Gastrocnemius medialis (tissue), 4 donors: ENCODE measurements at regions of chr2 and their contacts with region 1.

Region 1: DNA sequence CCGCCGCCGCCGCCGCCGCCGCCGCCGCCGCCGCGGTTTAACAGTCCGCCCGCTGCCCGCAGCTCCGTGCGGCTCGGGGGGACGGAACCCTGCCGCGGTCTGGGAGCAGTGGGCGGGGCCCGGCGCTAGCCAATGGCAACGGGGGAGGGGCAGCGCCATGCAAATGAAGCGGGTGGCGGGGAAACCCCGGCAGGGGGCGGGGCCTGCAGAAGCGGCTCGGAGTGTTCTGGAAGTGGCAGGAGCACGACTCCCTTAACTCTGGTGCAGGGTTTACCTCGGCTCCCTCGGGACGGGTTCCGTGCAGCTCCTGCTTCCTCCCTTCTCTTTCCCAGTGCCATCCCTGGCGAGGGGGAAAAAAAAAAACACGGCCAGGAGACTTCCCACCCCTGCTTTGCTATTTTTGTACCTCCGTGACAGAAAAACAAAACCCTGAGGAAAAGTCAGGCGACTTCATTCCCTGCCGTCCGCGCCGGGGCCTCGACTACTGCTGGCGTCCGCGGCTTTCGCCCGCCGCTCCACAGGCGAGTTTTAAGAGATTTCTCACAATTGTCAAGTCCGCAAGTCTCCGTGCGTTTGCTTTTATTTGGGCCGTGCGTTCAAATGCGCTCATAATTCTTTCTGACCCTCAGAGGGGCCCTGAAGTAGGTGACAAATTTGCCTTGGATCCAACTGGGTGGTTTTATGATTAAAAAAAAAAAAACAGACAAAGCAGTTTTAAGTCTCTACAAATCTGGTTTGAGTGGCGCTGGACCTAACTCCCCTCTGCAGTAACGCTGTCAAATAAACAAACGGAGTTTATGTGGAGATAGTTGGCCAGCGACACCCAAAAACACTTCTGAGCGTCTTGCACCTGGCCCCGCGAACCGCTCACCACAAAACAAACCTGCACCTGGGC is at the start of gene KANSL1L:
- DNase-seq: peak; percentile 98 to 99
- ATAC-seq: peak; percentile 83 to 85
- H3K4me3 ChIP-seq: peak within 1 kb of the TSS; percentile 72 to 96 (median 84)
- H3K27ac ChIP-seq: peak within 1 kb of the TSS; percentile 99 to 100 (median 100)
- H3K4me1 ChIP-seq: peaks cover 35 to 38% of the 10 kb centered on the region in 2 donors
- H3K27me3 ChIP-seq: no peaks in the 10 kb centered on the region
- CTCF ChIP-seq: no peak
- POLR2A ChIP-seq: peak; percentile 85 to 90
- total RNA-seq, gene KANSL1L: 19.4 to 21.9 (median 20.4) TPM

Region 2: GRCh38 chr2:210002158-210003157 is 169.1 kb before region 1 on chr2 and contains the start of gene RPE:
- in situ Hi-C with region 1: no loop called
- intact Hi-C with region 1: loop called (anchors 2 kb)
- DNase-seq: peak; percentile 92 to 95
- ATAC-seq: peak; percentile 99
- H3K4me3 ChIP-seq: peak within 1 kb of the TSS; percentile 94 to 98 (median 95)
- H3K27ac ChIP-seq: peak within 1 kb of the TSS; percentile 79 to 91 (median 84)
- H3K4me1 ChIP-seq: peaks cover 37 to 47% of the 10 kb centered on the region in 2 donors
- H3K27me3 ChIP-seq: no peaks in the 10 kb centered on the region
- CTCF ChIP-seq: no peak
- POLR2A ChIP-seq: peak; percentile 47 to 76
- total RNA-seq, gene RPE: 9.2 to 73.5 (median 23.2) TPM

Region 3: DNA sequence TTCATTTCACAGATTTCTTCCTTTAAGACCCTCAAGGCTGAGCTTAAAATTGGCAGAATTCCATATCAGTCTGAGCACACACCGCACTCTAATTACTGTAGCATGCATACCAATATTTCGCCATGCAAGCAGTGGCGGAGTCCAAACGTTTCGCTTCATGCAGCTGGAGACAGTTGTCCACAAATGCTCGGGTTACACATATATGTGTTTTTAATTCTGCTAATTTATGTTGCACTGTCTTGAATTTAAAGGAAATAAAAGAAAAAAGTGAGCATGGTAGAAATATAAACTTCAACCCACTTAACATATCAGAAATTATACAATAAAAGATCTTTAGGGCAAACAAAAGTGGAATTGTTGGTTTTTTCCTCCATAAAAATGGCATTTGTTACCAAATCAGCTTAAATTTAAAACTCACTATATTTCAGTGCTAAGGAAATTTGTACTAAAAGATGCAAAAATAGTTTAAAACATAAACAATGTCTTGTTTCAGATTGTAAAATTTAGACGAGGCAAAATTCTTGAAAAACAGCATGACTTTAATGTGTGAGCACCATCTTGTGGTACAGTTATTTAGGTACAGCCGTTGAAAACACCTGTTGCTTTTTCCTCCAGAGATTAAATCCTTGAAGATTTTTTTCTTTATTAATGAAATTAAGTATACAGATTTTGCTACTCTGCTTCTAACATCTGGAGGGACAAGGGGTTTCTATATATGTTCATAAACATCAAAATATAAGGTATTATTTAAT is 23.7 kb after region 1 on chr2:
- in situ Hi-C with region 1: no loop called
- intact Hi-C with region 1: loop called (anchors 2 kb)
- DNase-seq: no peak
- ATAC-seq: peak; percentile 49 to 50
- H3K4me3 ChIP-seq: peak overlapping the region; percentile 24 to 53 (median 49)
- H3K27ac ChIP-seq: no peak overlapping the region
- H3K4me1 ChIP-seq: peaks cover 4 to 7% of the 10 kb centered on the region in 2 donors
- H3K27me3 ChIP-seq: no peaks in the 10 kb centered on the region
- CTCF ChIP-seq: peak in 4 of 5 experiments; percentile 62 to 80 (median 71)
- POLR2A ChIP-seq: no peak

Region 4: DNA sequence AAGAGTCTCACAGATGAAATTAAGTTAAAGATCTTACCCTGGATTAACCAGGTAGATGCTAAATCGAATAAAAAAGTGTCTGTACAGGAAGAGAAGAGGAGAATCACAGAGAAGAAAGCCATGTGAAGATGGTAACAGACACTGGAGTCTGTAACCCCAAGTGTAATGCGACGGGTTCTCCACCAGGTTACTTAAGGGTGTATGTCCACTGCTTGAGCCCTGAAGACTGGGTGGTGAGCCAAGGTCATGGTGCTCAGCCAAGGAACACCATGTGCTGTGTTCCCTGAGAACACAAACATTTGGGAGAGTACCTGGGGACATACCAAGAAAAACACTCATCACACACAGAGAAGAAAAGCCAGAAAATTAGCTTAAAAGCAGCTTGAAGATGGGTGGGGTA is 61.9 kb after region 1 on chr2:
- in situ Hi-C with region 1: no loop called
- intact Hi-C with region 1: no loop called
- DNase-seq: peak; percentile 14 to 60
- ATAC-seq: peak; percentile 69 to 79
- H3K4me3 ChIP-seq: no peak overlapping the region
- H3K27ac ChIP-seq: no peak overlapping the region
- H3K4me1 ChIP-seq: peaks cover 0 to 5% of the 10 kb centered on the region in 2 donors
- H3K27me3 ChIP-seq: no peaks in the 10 kb centered on the region
- CTCF ChIP-seq: no peak
- POLR2A ChIP-seq: no peak

Region 5: DNA sequence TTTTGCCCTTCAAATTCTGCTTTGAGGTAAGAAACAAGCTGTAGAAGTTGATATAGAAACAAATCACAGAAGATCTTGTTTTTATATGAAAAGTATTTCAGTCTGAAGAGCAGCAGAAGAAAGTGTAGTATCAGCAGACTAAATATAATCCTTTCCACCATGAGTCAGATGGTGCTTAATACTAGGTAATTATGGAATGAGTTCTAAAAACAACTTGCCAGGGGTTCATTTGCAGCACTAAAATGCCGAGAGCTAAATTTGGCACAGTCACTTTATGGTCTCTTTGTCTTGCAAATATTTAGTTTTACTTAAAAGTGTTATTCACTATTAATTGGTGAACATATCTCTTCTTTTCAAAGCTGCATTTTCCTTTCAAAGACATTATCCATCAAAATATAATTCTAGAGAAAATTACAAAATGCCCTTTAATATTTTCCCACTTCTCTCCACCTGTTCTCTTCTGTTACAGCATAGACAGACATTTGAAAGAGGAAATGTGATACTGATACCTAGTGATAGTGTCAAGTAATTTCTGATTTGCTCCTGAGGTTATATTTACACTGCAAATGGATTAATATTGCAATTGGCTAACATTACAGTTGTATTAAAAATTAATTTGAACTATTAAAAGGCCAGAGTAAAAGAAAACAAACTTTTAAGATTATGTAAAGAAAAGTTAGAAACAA is 138.1 kb after region 1 on chr2:
- in situ Hi-C with region 1: no loop called
- intact Hi-C with region 1: loop called (anchors 5 kb)
- DNase-seq: no peak
- ATAC-seq: peak; percentile 79 to 87
- H3K4me3 ChIP-seq: peak overlapping the region; percentile 9 to 30 (median 24)
- H3K27ac ChIP-seq: peak overlapping the region; percentile 75 to 86 (median 84)
- H3K4me1 ChIP-seq: peaks cover 23 to 33% of the 10 kb centered on the region in 2 donors
- H3K27me3 ChIP-seq: no peaks in the 10 kb centered on the region
- CTCF ChIP-seq: no peak
- POLR2A ChIP-seq: no peak

Region 6: DNA sequence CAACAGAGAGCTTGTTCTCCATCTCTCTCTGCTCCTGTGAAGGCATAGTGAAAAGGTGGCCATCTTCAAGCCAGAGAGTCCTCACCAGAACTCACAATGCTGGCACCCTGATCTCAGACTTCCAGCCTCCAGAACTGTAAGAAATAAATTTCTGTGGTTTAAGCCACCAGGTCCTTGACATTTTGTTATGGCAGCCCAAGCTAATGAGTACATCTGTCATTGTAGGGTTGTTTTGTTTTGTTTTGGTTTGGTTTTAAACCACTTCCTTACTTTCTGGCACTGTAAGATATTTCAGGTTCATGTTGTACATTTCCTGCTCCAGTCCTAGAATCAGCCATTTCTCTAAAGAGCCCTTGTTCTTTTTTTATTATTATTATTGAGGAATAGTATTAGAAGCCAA is 556.0 kb after region 1 on chr2:
- in situ Hi-C with region 1: no loop called
- intact Hi-C with region 1: no loop called
- DNase-seq: no peak
- ATAC-seq: no peak
- H3K4me3 ChIP-seq: no peak overlapping the region
- H3K27ac ChIP-seq: no peak overlapping the region
- H3K4me1 ChIP-seq: no peaks in the 10 kb centered on the region
- H3K27me3 ChIP-seq: no peaks in the 10 kb centered on the region
- CTCF ChIP-seq: no peak
- POLR2A ChIP-seq: no peak